Panc1 (cell line): ENCODE measurements at regions of chr1 and their contacts with region 1.

Region 1: GRCh38 chr1:161201828-161202725 is at the start of gene NDUFS2:
- DNase-seq: peak; percentile 89
- ATAC-seq: peak; percentile 97
- H3K4me3 ChIP-seq: peak within 1 kb of the TSS; percentile 72 to 98
- H3K27ac ChIP-seq: peak within 1 kb of the TSS; percentile 96
- H3K4me1 ChIP-seq: peaks cover 38% of the 10 kb centered on the region
- H3K27me3 ChIP-seq: no peaks in the 10 kb centered on the region
- CTCF ChIP-seq: no peak
- total RNA-seq, gene NDUFS2: 94.9 TPM

Region 2: DNA sequence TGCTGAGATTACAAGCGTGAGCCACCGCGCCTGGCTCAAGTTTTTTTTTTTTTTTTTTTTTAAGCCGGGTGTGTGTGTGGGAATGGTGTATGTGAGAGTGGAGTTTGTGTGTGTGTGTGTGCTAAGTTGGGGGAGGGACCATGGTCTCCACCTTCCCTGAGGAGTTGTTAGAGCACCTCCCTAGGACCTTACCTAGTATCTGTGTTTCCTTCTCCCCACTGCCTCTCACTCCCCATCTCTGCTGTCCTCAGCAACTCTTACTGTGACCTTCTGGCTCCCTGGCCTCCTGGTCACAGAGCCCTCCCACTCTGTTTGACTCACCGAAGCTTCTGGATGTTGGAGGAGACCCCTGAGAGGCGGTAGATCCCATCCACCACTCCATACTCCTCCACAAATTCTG is 142.8 kb before region 1 on chr1:
- CTCF ChIA-PET with region 1: interaction called, 12 read pairs
- POLR2A ChIA-PET with region 1: no interaction called
- in situ Hi-C with region 1: no loop called
- intact Hi-C with region 1: no loop called
- DNase-seq: no peak
- ATAC-seq: 0 out of 2 replicates have a peak, but pooled peaks have one; percentile 21
- H3K4me3 ChIP-seq: no peak overlapping the region
- H3K27ac ChIP-seq: no peak overlapping the region
- H3K4me1 ChIP-seq: no peaks in the 10 kb centered on the region
- H3K27me3 ChIP-seq: no peaks in the 10 kb centered on the region
- CTCF ChIP-seq: no peak

Region 3: DNA sequence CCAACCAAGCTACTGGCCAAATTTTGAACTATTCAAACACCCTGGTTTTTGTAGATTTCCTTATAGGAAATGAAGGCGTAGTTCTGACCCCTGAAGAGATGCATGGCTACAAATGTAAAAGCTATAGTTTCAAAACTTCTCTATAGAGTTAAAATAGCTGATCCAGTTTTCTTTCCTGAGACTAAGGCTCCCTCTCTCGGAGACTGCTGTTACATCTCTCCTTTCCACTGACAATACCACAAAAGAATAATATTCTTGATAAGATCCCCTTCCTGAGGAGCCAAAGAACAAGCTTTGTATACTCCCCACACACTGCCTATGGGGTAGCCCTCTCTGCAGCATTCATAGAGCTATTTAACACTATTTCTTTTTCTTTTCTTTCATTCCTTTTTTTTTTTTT is 172.3 kb after region 1 on chr1:
- CTCF ChIA-PET with region 1: no interaction called
- POLR2A ChIA-PET with region 1: interaction called, 10 read pairs
- in situ Hi-C with region 1: loop called (anchors 25 kb)
- intact Hi-C with region 1: no loop called
- DNase-seq: no peak
- ATAC-seq: peak; percentile 82
- H3K4me3 ChIP-seq: no peak overlapping the region
- H3K27ac ChIP-seq: no peak overlapping the region
- H3K4me1 ChIP-seq: no peaks in the 10 kb centered on the region
- H3K27me3 ChIP-seq: no peaks in the 10 kb centered on the region
- CTCF ChIP-seq: peak; percentile 70; the same call in 1 of the 2 replicates

Region 4: DNA sequence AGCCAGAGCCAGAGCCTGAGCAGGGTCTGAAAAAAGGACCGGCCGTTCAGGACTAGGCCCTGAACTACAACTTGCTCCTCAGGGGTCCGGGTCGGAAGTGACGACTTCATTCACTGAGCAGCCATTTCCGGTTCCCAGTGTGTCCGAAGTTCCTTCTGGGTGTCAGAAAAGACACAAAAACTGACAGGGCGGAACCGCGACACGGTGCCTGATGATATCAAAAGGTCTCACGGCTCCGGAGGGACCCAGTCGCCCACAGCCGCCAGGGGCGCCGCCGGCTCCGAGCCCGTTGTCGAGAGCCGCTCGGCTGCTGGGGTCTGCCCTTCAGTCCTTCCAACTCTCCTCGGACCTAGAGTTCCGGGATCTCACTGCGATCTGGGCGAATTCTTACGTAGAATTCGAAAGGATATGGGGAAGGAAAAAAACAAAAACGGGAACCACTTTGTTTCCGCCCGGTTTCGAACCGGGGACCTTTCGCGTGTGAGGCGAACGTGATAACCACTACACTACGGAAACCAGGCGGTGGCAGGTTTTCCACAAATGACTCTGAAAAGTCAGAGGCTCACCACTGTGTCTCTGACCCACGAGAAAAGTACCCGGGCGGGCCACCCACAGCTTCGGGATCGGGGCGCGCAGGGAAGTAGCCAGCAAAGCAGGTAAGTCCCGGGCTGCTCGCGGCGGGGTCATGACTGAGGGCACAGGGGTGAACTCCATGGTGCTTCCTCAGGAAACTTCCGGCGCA is 197.4 kb after region 1 on chr1:
- CTCF ChIA-PET with region 1: no interaction called
- POLR2A ChIA-PET with region 1: no interaction called
- in situ Hi-C with region 1: loop called (anchors 25 kb)
- intact Hi-C with region 1: no loop called
- DNase-seq: peak; percentile 91
- ATAC-seq: peak; percentile 82
- H3K4me3 ChIP-seq: peak overlapping the region; percentile 74 to 82
- H3K27ac ChIP-seq: peak overlapping the region; percentile 100
- H3K4me1 ChIP-seq: peaks cover 39% of the 10 kb centered on the region
- H3K27me3 ChIP-seq: no peaks in the 10 kb centered on the region
- CTCF ChIP-seq: no peak; the same call in 1 of the 2 replicates

Region 5: GRCh38 chr1:161749509-161750407 is 547.7 kb after region 1 on chr1 and contains the start of gene DUSP12:
- CTCF ChIA-PET with region 1: no interaction called
- POLR2A ChIA-PET with region 1: no interaction called
- in situ Hi-C with region 1: no loop called
- intact Hi-C with region 1: no loop called
- DNase-seq: no peak
- ATAC-seq: peak; percentile 98
- H3K4me3 ChIP-seq: peak within 1 kb of the TSS; percentile 74 to 90
- H3K27ac ChIP-seq: peak within 1 kb of the TSS; percentile 86
- H3K4me1 ChIP-seq: peaks cover 8% of the 10 kb centered on the region
- H3K27me3 ChIP-seq: no peaks in the 10 kb centered on the region
- CTCF ChIP-seq: peak; percentile 54
- total RNA-seq, gene DUSP12: 22.0 TPM